ENCODE measurements at regions of chr1 and their contacts with region 1.

Region 1: DNA sequence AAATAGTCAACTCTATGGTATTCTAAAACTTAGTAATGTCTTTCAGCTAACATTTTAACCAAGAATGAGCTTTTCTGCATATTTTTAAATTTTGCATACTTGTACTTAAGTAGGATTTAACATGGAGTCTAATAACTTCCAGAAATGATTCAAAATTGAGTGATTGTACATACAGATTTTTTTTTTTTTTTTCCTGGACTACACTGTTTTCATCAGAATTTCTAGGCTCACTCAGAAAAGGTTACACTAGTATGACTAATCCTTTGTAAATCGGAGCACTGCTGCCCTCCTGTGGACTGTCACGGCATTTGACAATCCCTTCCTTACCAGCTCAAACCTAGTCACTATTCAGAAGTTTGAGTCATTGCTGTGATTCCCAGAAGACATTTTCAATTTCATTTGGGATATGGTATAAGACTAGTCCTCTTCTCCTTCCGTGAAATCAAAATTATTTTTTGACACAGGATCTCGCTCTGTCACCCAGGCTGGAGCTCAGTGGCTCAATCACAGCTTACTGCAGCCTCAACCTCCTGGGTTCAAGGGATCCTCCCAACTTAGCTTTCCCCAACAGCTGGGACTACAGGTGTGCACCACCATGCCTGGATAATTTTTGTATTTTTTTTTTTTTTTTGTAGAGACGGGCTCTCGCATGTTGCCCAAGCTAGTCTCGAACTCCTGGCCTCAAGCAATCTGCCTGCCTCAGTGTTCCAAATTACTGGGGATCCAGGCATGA is 45.5 kb downstream of the CD46 start:
- DNase-seq: peak; percentile 53 to 78 (median 58)
- H3K4me3 ChIP-seq: no peak overlapping the region
- H3K4me3 Mint-ChIP-seq: no peak overlapping the region
- H3K27ac ChIP-seq: no peak overlapping the region
- H3K27ac Mint-ChIP-seq: peak overlapping the region in 3 of 7 donors; percentile 23 to 54 (median 26)
- H3K4me1 ChIP-seq: peaks cover 32% of the 10 kb centered on the region
- H3K4me1 Mint-ChIP-seq: peaks cover 38 to 52% (median 40%) of the 10 kb centered on the region in 4 donors
- H3K27me3 ChIP-seq: no peaks in the 10 kb centered on the region
- H3K27me3 Mint-ChIP-seq: no peaks in the 10 kb centered on the region

Region 2: DNA sequence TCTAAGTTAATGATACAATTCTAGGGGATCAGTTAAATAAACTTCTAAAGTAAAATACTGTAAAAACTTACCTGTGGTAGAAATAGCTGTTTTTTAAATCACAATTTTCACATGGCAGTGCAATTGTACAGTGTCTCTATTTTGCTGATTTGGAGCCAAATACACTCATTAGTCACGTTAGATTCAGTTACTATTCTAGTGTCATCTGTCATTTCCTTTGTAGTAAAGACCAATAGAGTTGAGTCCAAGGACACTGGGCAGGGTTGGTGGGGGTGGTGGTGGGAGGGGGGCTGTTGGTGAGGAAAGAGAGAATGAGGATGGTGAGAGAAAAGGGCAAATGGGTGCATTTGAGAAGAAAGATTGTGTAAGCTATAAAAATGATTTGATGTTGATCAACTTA is 442.3 kb before region 1 on chr1:
- CTCF ChIA-PET with region 1: no interaction called
- POLR2A ChIA-PET with region 1: no interaction called
- intact Hi-C with region 1: no loop called
- DNase-seq: no peak
- H3K4me3 ChIP-seq: no peak overlapping the region
- H3K4me3 Mint-ChIP-seq: no peak overlapping the region
- H3K27ac ChIP-seq: no peak overlapping the region
- H3K27ac Mint-ChIP-seq: no peak overlapping the region
- H3K4me1 ChIP-seq: no peaks in the 10 kb centered on the region
- H3K4me1 Mint-ChIP-seq: peaks cover 15 to 19% (median 16%) of the 10 kb centered on the region in 4 donors
- H3K27me3 ChIP-seq: no peaks in the 10 kb centered on the region
- H3K27me3 Mint-ChIP-seq: no peaks in the 10 kb centered on the region

Region 3: DNA sequence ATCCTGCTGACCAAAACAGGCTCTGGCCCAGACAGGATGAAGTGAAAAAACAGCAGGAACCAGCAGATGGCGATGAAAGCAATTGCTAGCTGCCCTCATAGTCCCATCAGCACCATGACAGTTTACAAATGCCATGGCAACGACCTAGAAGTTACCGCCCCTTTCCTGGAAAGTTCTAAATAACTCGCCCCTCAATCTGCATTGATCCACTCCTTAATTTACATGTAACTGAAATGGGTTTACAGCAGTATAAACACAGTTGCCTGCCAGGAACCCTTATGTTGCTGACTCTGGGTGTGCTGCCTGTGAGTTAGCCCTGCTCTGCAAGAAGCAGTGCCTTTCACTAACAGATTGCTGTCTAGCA is 218.0 kb before region 1 on chr1:
- CTCF ChIA-PET with region 1: interaction called, 15 read pairs
- POLR2A ChIA-PET with region 1: no interaction called
- intact Hi-C with region 1: no loop called
- DNase-seq: peak; percentile 11 to 35 (median 26)
- H3K4me3 ChIP-seq: no peak overlapping the region
- H3K4me3 Mint-ChIP-seq: no peak overlapping the region
- H3K27ac ChIP-seq: no peak overlapping the region
- H3K27ac Mint-ChIP-seq: no peak overlapping the region
- H3K4me1 ChIP-seq: no peaks in the 10 kb centered on the region
- H3K4me1 Mint-ChIP-seq: peaks cover 0 to 8% (median 6%) of the 10 kb centered on the region in 4 donors
- H3K27me3 ChIP-seq: no peaks in the 10 kb centered on the region
- H3K27me3 Mint-ChIP-seq: peaks cover 3 to 7% of the 10 kb centered on the region in 2 donors

Region 4: GRCh38 chr1:207698822-207699483 is 98.4 kb before region 1 on chr1:
- CTCF ChIA-PET with region 1: interaction called, 10 read pairs
- POLR2A ChIA-PET with region 1: no interaction called
- intact Hi-C with region 1: loop called (anchors 5 kb)
- DNase-seq: peak in 3 of 5 donors; percentile 8 to 20 (median 17)
- H3K4me3 ChIP-seq: no peak overlapping the region
- H3K4me3 Mint-ChIP-seq: no peak overlapping the region
- H3K27ac ChIP-seq: no peak overlapping the region
- H3K27ac Mint-ChIP-seq: peak overlapping the region in 1 of 7 donors; percentile 57
- H3K4me1 ChIP-seq: no peaks in the 10 kb centered on the region
- H3K4me1 Mint-ChIP-seq: no peaks in the 10 kb centered on the region
- H3K27me3 ChIP-seq: no peaks in the 10 kb centered on the region
- H3K27me3 Mint-ChIP-seq: peaks cover 5 to 10% of the 10 kb centered on the region in 2 donors

Region 5: DNA sequence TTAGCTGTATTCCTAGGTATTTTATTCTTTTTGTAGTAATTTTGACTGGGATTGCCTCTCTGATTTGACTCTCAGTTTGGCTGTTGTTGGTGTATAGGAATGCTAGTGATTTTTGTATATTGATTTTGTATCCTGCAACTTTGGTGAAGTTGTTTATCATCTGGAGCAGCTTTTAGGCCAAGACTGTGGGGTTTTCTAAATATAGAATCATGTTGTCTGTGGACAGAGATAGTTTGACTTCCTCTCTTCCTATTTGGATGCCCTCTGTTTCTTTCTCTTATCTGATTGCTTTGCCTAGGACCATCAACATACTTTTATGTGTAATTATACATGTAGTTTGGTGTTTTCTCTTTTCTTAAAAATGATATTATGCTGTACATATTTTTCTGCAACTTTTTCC is 18.4 kb before region 1 on chr1:
- CTCF ChIA-PET with region 1: interaction called, 14 read pairs
- POLR2A ChIA-PET with region 1: interaction called, 3 read pairs
- intact Hi-C with region 1: no loop called
- DNase-seq: no peak
- H3K4me3 ChIP-seq: no peak overlapping the region
- H3K4me3 Mint-ChIP-seq: no peak overlapping the region
- H3K27ac ChIP-seq: no peak overlapping the region
- H3K27ac Mint-ChIP-seq: peak overlapping the region in 1 of 7 donors; percentile 18
- H3K4me1 ChIP-seq: peaks cover 4% of the 10 kb centered on the region
- H3K4me1 Mint-ChIP-seq: peaks cover 24 to 44% (median 35%) of the 10 kb centered on the region in 4 donors
- H3K27me3 ChIP-seq: no peaks in the 10 kb centered on the region
- H3K27me3 Mint-ChIP-seq: no peaks in the 10 kb centered on the region

Region 6: GRCh38 chr1:207828485-207829158 is 31.2 kb after region 1 on chr1:
- CTCF ChIA-PET with region 1: interaction called, 18 read pairs
- POLR2A ChIA-PET with region 1: interaction called, 20 read pairs
- intact Hi-C with region 1: no loop called
- DNase-seq: peak; percentile 58 to 72 (median 62)
- H3K4me3 ChIP-seq: no peak overlapping the region
- H3K4me3 Mint-ChIP-seq: peak overlapping the region in 4 of 8 donors; percentile 0 to 55 (median 26)
- H3K27ac ChIP-seq: peak overlapping the region; percentile 86
- H3K27ac Mint-ChIP-seq: peak overlapping the region; percentile 71 to 100 (median 99)
- H3K4me1 ChIP-seq: peaks cover 95% of the 10 kb centered on the region
- H3K4me1 Mint-ChIP-seq: peaks cover 73 to 95% (median 88%) of the 10 kb centered on the region in 4 donors
- H3K27me3 ChIP-seq: no peaks in the 10 kb centered on the region
- H3K27me3 Mint-ChIP-seq: peaks cover 2 to 4% of the 10 kb centered on the region in 2 donors

Region 7: GRCh38 chr1:207876131-207876530 is 78.7 kb after region 1 on chr1:
- CTCF ChIA-PET with region 1: interaction called, 30 read pairs
- POLR2A ChIA-PET with region 1: interaction called, 3 read pairs
- intact Hi-C with region 1: no loop called
- DNase-seq: no peak
- H3K4me3 ChIP-seq: no peak overlapping the region
- H3K4me3 Mint-ChIP-seq: peak overlapping the region in 1 of 8 donors; percentile 59
- H3K27ac ChIP-seq: no peak overlapping the region
- H3K27ac Mint-ChIP-seq: peak overlapping the region in 2 of 7 donors; percentile 18 to 65
- H3K4me1 ChIP-seq: peaks cover 45% of the 10 kb centered on the region
- H3K4me1 Mint-ChIP-seq: peaks cover 40 to 59% (median 47%) of the 10 kb centered on the region in 4 donors
- H3K27me3 ChIP-seq: no peaks in the 10 kb centered on the region
- H3K27me3 Mint-ChIP-seq: no peaks in the 10 kb centered on the region

Region 8: DNA sequence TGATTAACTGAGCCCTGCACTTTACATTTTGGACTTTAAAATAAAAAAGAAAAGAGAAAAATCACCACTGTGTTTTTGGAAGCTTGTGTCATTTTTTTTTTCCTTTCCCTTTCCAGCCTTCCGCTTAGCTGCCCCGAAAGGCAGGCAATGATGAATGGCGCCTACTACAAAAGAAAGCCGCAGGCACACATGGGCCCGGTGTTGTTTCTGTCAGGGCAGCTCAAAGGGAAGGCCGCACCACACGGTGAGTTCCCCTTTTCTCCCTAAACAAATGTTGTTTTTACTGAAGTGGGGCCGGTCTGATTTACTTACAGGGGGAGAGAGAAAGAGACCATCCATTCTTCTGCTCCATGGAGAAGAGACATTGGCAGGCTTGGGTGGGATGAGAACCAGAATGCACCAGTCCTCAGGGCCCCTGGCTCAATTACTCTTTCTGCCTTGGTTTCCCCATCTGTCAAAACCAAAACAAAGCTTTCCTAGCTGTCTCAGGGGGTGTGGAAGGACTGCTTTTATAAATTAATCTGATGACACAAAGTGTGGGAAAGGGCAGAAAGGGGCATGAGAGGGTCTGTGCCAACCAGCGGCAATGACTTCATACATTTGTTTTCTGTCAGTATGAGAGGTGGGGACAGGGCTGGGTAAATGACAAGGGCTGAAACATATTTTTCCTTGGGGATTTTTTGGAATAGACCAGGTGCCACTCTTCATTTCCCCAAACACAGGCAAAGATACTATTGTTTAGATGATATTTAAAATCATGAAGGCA is 538.2 kb after region 1 on chr1:
- CTCF ChIA-PET with region 1: no interaction called
- POLR2A ChIA-PET with region 1: no interaction called
- intact Hi-C with region 1: no loop called
- DNase-seq: no peak
- H3K4me3 ChIP-seq: no peak overlapping the region
- H3K4me3 Mint-ChIP-seq: no peak overlapping the region
- H3K27ac ChIP-seq: no peak overlapping the region
- H3K27ac Mint-ChIP-seq: no peak overlapping the region
- H3K4me1 ChIP-seq: no peaks in the 10 kb centered on the region
- H3K4me1 Mint-ChIP-seq: no peaks in the 10 kb centered on the region
- H3K27me3 ChIP-seq: no peaks in the 10 kb centered on the region
- H3K27me3 Mint-ChIP-seq: peaks cover 13 to 15% of the 10 kb centered on the region in 2 donors

Measured in CD4-positive, alpha-beta memory T cell (primary cell).